Activated CD8-positive, alpha-beta memory T cell treated with anti-CD3 and anti-CD28 coated beads, Interleukin-2, amount 10 ng/mL, durations not matched to agents 7 days and 5 days (primary cell): ENCODE measurements at regions of chr20 and their contacts with region 1.

Region 1: GRCh38 chr20:17431621-17432364 is 99.4 kb downstream of the BFSP1 start:
- DNase-seq: peak; percentile 53
- ATAC-seq: peak; percentile 58
- H3K4me3 Mint-ChIP-seq: no peak overlapping the region
- H3K27ac Mint-ChIP-seq: no peak overlapping the region
- H3K4me1 Mint-ChIP-seq: no peaks in the 10 kb centered on the region
- H3K27me3 Mint-ChIP-seq: peaks cover 22% of the 10 kb centered on the region

Region 2: GRCh38 chr20:16801919-16802911 is 629.6 kb before region 1 on chr20:
- CTCF ChIA-PET with region 1: interaction called, 15 read pairs
- DNase-seq: peak; percentile 71
- ATAC-seq: no peak
- H3K4me3 Mint-ChIP-seq: no peak overlapping the region
- H3K27ac Mint-ChIP-seq: no peak overlapping the region
- H3K4me1 Mint-ChIP-seq: no peaks in the 10 kb centered on the region
- H3K27me3 Mint-ChIP-seq: peaks cover 37% of the 10 kb centered on the region

Region 3: DNA sequence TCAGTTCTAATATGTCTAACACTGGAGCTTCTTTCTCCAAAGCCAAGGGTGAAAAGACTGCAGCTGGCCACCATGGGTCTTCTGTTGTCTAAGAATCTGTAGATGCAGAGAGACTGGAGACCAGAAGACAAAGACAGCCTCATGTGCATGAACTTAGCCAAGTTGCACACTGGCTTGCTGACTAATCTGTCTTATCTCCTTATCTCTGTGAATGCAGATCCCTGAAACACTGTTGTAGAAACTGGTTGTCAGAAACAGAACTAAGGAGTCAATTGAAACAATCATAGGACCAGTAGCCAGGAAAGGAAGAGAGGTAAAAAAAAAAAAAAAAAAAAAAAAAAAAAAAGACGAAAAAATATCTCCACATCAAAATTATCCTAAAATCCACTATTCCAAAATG is 10.3 kb before region 1 on chr20:
- CTCF ChIA-PET with region 1: interaction called, 22 read pairs
- DNase-seq: no peak
- ATAC-seq: no peak
- H3K4me3 Mint-ChIP-seq: no peak overlapping the region
- H3K27ac Mint-ChIP-seq: no peak overlapping the region
- H3K4me1 Mint-ChIP-seq: no peaks in the 10 kb centered on the region
- H3K27me3 Mint-ChIP-seq: peaks cover 5% of the 10 kb centered on the region

Region 4: GRCh38 chr20:17504898-17505635 is 73.3 kb after region 1 on chr20:
- CTCF ChIA-PET with region 1: no interaction called
- DNase-seq: peak; percentile 89
- ATAC-seq: peak; percentile 75
- H3K4me3 Mint-ChIP-seq: peak overlapping the region; percentile 78
- H3K27ac Mint-ChIP-seq: peak overlapping the region; percentile 96
- H3K4me1 Mint-ChIP-seq: peaks cover 60% of the 10 kb centered on the region
- H3K27me3 Mint-ChIP-seq: peaks cover 2% of the 10 kb centered on the region